ENCODE measurements at regions of chr3 and their contacts with region 1.

Region 1: GRCh38 chr3:138186803-138187295 is 252 bp upstream of the ARMC8 start:
- DNase-seq: no peak
- H3K4me3 ChIP-seq: peak overlapping the region; percentile 57 to 98 (median 84)
- H3K27ac ChIP-seq: peak overlapping the region; percentile 99
- H3K4me1 ChIP-seq: peaks cover 0 to 5% (median 3%) of the 10 kb centered on the region in 4 experiments; a peak in 3 of 7 replicates
- H3K27me3 ChIP-seq: peaks cover 0 to 5% (median 0%) of the 10 kb centered on the region in 4 experiments; a peak in 2 of 7 replicates
- CTCF ChIP-seq: no peak
- EP300 ChIP-seq: no peak
- POLR2A ChIP-seq: no peak
- RAD21 ChIP-seq: no peak

Region 2: GRCh38 chr3:137946345-137946973 is 240.4 kb before region 1 on chr3:
- CTCF ChIA-PET with region 1: no interaction called
- POLR2A ChIA-PET with region 1: no interaction called
- DNase-seq: peak; percentile 41 to 67
- H3K4me3 ChIP-seq: no peak overlapping the region
- H3K27ac ChIP-seq: no peak overlapping the region
- H3K4me1 ChIP-seq: peaks cover 0 to 10% (median 0%) of the 10 kb centered on the region in 4 experiments; a peak in 1 of 7 replicates
- H3K27me3 ChIP-seq: peaks cover 0 to 5% (median under 1%) of the 10 kb centered on the region in 4 experiments; a peak in 4 of 7 replicates
- CTCF ChIP-seq: peak; percentile 31 to 79 (median 73)
- EP300 ChIP-seq: no peak
- POLR2A ChIP-seq: no peak
- RAD21 ChIP-seq: peak; percentile 97 to 98

Region 3: DNA sequence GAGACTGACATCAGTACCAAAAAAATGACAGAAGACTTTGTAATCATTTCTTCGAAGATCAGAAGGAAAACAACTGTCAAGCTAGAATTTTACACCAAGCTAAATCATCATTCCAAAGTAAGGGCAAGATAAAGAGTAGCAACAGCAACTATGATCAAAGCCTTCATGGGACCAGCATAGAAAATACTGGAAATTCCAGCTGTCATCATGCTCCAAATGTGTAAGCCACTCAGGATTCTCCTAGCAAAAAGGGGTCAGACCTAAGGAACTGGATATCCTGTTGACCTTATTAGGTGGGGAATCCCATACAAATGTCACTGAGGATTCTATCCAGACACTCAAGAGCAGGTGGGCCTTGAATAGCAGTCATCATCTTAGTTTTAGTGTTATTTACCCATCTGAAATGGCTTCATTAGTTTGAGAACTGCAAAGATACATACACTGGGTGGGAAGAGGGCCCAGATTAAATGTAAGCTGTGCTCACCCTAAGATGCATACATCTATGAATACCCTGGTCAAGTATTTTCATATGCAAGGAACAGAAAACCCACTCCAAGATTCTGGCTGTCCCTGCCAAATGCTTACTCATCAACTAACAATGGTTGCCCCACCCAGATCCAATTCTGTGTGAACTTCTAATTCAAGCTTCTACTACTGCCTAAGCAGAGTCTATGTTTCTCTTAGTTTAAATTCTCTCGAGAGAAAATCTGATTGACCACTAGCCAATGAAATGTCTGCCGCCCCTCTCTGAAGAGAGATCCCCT is 143.4 kb before region 1 on chr3:
- CTCF ChIA-PET with region 1: no interaction called
- POLR2A ChIA-PET with region 1: no interaction called
- DNase-seq: no peak
- H3K4me3 ChIP-seq: no peak overlapping the region
- H3K27ac ChIP-seq: no peak overlapping the region
- H3K4me1 ChIP-seq: peaks cover 2 to 9% (median 4%) of the 10 kb centered on the region in 4 experiments; a peak in 5 of 7 replicates
- H3K27me3 ChIP-seq: no peaks in the 10 kb centered on the region
- CTCF ChIP-seq: no peak
- EP300 ChIP-seq: no peak
- POLR2A ChIP-seq: no peak
- RAD21 ChIP-seq: no peak

Region 4: GRCh38 chr3:138174421-138175122 is 12.3 kb before region 1 on chr3 and contains the start of gene DBR1:
- CTCF ChIA-PET with region 1: interaction called, 4 read pairs
- POLR2A ChIA-PET with region 1: interaction called, 56 read pairs
- DNase-seq: peak in 1 of 2 experiments; percentile 85
- H3K4me3 ChIP-seq: peak within 1 kb of the TSS; percentile 82 to 93 (median 86)
- H3K27ac ChIP-seq: peak within 1 kb of the TSS; percentile 73; the same call in 1 of the 2 replicates
- H3K4me1 ChIP-seq: no peaks in the 10 kb centered on the region; a peak in 1 of 7 replicates
- H3K27me3 ChIP-seq: no peaks in the 10 kb centered on the region
- CTCF ChIP-seq: no peak
- EP300 ChIP-seq: no peak
- POLR2A ChIP-seq: peak; percentile 92 to 96
- RAD21 ChIP-seq: no peak; a peak in 1 of 4 replicates
- total RNA-seq, gene DBR1: 18.0 and 18.3 TPM in 2 replicates

Region 5: DNA sequence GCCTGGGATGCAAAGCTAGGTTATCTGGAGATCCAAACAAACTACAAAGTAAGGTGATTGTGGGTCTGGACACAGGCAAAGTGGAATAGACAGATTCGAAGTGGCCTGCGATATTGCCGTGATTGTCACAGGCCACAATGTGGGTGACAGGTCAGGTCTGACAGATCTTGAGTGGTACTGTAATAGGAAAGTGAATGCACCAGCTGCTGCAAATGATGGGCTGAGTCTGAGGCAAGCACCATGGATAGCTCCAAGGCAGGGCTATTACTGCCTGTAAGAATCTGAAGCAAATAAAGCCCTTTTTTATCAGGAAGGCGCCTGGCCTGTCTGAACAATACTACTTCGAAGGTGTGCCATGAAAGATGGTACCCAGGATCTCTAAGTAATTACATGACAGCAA is 10.2 kb after region 1 on chr3:
- CTCF ChIA-PET with region 1: interaction called, 3 read pairs
- POLR2A ChIA-PET with region 1: interaction called, 26 read pairs
- DNase-seq: no peak
- H3K4me3 ChIP-seq: no peak overlapping the region
- H3K27ac ChIP-seq: no peak overlapping the region
- H3K4me1 ChIP-seq: no peaks in the 10 kb centered on the region
- H3K27me3 ChIP-seq: no peaks in the 10 kb centered on the region
- CTCF ChIP-seq: no peak
- EP300 ChIP-seq: no peak
- POLR2A ChIP-seq: no peak
- RAD21 ChIP-seq: no peak

Region 6: DNA sequence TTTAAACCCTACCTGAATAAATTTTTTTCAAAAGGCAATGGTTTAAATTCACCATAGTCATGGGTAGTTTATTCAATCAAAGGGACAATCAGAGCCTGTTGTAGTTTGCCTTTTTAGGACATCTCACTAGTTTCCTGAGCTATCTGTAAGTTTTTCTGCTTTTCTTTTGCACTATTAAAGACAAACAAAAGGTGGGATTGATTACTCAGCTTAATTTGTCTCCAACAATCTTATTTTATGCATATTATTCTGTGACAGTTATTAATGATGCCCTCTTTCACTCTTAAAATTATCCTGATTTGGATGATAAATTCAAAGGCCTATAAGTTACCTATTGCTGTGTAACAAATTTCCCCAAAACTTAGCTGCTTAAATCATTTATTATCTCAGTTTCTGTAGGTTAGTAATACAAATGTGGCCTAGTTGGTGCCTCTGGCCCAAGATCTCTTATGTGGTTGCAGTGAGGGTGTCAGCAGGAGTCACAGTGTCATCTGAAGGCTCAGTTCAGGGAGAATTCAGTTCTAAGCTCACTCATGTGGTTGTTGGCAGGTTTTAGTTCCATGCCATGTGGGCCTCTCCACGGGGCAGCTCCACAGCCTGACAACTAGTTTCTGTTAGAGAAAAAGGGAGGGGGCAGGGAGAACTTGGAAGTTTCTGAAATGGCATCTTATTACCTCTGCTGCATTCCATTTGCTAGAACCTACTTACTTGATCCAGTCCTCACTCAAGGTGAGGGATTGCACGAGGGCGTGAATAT is 16.3 kb after region 1 on chr3:
- CTCF ChIA-PET with region 1: interaction called, 3 read pairs
- POLR2A ChIA-PET with region 1: interaction called, 20 read pairs
- DNase-seq: no peak
- H3K4me3 ChIP-seq: no peak overlapping the region
- H3K27ac ChIP-seq: no peak overlapping the region
- H3K4me1 ChIP-seq: peaks cover 0 to 5% (median under 1%) of the 10 kb centered on the region in 4 experiments; a peak in 3 of 7 replicates
- H3K27me3 ChIP-seq: no peaks in the 10 kb centered on the region
- CTCF ChIP-seq: no peak
- EP300 ChIP-seq: no peak
- POLR2A ChIP-seq: no peak
- RAD21 ChIP-seq: no peak

Region 7: GRCh38 chr3:138210528-138210927 is 23.7 kb after region 1 on chr3:
- CTCF ChIA-PET with region 1: interaction called, 3 read pairs
- POLR2A ChIA-PET with region 1: interaction called, 11 read pairs
- DNase-seq: no peak
- H3K4me3 ChIP-seq: peak overlapping the region in 1 of 4 experiments; percentile 1; a peak in 1 of 8 replicates
- H3K27ac ChIP-seq: no peak overlapping the region
- H3K4me1 ChIP-seq: peaks cover 0 to 5% (median 2%) of the 10 kb centered on the region in 4 experiments; a peak in 2 of 7 replicates
- H3K27me3 ChIP-seq: no peaks in the 10 kb centered on the region
- CTCF ChIP-seq: no peak
- EP300 ChIP-seq: no peak
- POLR2A ChIP-seq: no peak
- RAD21 ChIP-seq: no peak

Region 8: GRCh38 chr3:138371070-138371965 is 184.5 kb after region 1 on chr3:
- CTCF ChIA-PET with region 1: no interaction called
- POLR2A ChIA-PET with region 1: no interaction called
- DNase-seq: no peak
- H3K4me3 ChIP-seq: no peak overlapping the region
- H3K27ac ChIP-seq: no peak overlapping the region
- H3K4me1 ChIP-seq: no peaks in the 10 kb centered on the region
- H3K27me3 ChIP-seq: no peaks in the 10 kb centered on the region
- CTCF ChIP-seq: no peak
- EP300 ChIP-seq: no peak
- POLR2A ChIP-seq: no peak
- RAD21 ChIP-seq: peak in 1 of 2 experiments; percentile 16; a peak in 1 of 4 replicates